CD8-positive, alpha-beta T cell (primary cell): ENCODE measurements at regions of chr18 and their contacts with region 1.

Region 1: DNA sequence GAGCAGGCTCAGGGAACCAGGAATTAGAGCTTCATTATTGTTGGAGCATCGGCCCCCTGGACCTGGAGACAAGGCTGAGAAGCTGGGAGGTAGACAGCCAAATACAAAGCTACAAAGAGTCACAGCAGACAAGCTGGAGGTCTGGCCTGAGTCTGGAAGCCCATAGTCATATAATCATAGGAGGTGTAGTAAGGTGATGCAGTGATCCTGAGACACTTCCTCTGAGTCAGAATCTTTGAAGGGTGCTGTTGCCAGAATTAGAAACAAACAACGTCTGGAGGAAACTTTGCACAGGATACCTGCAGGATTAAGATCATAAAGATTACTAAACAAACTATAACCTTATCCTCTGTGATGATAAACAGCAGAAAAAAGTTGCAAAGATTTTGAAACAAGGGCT is 213.8 kb downstream of the DSC3 start:
- DNase-seq: no peak
- ATAC-seq: no peak
- H3K4me3 ChIP-seq: no peak overlapping the region
- H3K4me3 Mint-ChIP-seq: no peak overlapping the region
- H3K27ac ChIP-seq: no peak overlapping the region
- H3K27ac Mint-ChIP-seq: no peak overlapping the region
- H3K4me1 ChIP-seq: no peaks in the 10 kb centered on the region
- H3K4me1 Mint-ChIP-seq: no peaks in the 10 kb centered on the region
- H3K27me3 ChIP-seq: no peaks in the 10 kb centered on the region
- H3K27me3 Mint-ChIP-seq: no peaks in the 10 kb centered on the region
- CTCF ChIP-seq: no peak

Region 2: DNA sequence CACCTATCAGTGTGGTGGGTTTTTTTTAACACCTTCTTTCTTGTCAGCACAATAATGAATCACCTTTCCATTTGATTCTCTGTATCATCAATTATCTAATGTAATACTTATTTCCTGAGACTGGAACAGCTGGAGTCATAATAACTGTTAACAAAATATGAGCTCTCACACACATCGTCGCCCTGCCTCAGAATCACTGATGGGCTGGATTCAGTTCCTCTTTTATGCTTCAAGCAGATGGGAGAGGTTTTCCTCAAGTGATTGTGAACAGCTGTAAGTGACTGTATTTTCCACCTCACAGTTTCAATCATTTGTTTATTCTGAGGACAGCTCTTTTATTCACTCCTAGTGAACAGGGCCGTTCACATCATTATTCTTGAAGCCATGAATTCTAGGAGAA is 116.3 kb before region 1 on chr18:
- CTCF ChIA-PET with region 1: no interaction called
- POLR2A ChIA-PET with region 1: no interaction called
- intact Hi-C with region 1: loop called in 1 of 2 experiments (anchors 10 kb)
- DNase-seq: no peak
- ATAC-seq: no peak
- H3K4me3 ChIP-seq: no peak overlapping the region
- H3K4me3 Mint-ChIP-seq: no peak overlapping the region
- H3K27ac ChIP-seq: no peak overlapping the region
- H3K27ac Mint-ChIP-seq: no peak overlapping the region
- H3K4me1 ChIP-seq: no peaks in the 10 kb centered on the region
- H3K4me1 Mint-ChIP-seq: no peaks in the 10 kb centered on the region
- H3K27me3 ChIP-seq: no peaks in the 10 kb centered on the region
- H3K27me3 Mint-ChIP-seq: no peaks in the 10 kb centered on the region
- CTCF ChIP-seq: no peak

Region 3: DNA sequence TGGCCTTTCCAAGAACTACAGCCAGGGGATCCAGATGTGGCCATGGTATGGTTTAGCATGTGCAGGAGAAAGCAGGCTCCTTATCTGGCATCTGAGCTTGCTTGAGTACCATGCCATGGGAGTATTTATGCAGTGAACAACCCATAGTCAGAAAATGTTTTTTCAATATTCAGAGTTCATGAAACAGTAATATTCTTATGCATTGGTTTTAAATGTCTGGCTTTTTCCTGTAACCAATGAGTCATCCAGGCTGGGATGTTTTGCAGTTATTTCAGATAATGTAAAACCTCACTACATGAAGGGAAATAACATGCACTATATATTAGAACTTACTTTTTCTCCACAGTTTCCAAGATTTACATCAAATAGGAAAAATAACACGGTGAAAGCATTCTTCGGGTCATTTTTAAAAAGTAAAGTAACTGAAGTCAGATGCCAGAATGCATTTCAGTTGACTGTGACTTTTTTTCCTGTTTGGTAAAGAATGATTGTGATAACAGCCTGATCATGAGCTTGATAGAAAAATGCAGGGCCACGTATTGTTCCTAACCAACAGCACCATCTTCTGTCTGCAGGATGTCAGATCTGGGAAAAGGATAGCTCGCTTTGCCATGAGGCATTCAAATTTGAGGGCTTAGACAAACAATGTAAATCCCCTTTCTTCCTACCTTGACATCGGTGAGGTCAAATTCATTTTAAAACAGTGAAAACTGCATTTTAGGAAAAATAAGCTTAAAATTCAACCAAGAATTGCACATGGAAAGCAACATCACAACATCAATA is 61.0 kb after region 1 on chr18:
- CTCF ChIA-PET with region 1: no interaction called
- POLR2A ChIA-PET with region 1: no interaction called
- intact Hi-C with region 1: loop called in 1 of 2 experiments (anchors 5 kb)
- DNase-seq: no peak
- ATAC-seq: no peak
- H3K4me3 ChIP-seq: no peak overlapping the region
- H3K4me3 Mint-ChIP-seq: no peak overlapping the region
- H3K27ac ChIP-seq: no peak overlapping the region
- H3K27ac Mint-ChIP-seq: no peak overlapping the region
- H3K4me1 ChIP-seq: no peaks in the 10 kb centered on the region
- H3K4me1 Mint-ChIP-seq: no peaks in the 10 kb centered on the region
- H3K27me3 ChIP-seq: no peaks in the 10 kb centered on the region
- H3K27me3 Mint-ChIP-seq: no peaks in the 10 kb centered on the region
- CTCF ChIP-seq: no peak